ENCODE measurements at regions of chr11 and their contacts with region 1.

Region 1: DNA sequence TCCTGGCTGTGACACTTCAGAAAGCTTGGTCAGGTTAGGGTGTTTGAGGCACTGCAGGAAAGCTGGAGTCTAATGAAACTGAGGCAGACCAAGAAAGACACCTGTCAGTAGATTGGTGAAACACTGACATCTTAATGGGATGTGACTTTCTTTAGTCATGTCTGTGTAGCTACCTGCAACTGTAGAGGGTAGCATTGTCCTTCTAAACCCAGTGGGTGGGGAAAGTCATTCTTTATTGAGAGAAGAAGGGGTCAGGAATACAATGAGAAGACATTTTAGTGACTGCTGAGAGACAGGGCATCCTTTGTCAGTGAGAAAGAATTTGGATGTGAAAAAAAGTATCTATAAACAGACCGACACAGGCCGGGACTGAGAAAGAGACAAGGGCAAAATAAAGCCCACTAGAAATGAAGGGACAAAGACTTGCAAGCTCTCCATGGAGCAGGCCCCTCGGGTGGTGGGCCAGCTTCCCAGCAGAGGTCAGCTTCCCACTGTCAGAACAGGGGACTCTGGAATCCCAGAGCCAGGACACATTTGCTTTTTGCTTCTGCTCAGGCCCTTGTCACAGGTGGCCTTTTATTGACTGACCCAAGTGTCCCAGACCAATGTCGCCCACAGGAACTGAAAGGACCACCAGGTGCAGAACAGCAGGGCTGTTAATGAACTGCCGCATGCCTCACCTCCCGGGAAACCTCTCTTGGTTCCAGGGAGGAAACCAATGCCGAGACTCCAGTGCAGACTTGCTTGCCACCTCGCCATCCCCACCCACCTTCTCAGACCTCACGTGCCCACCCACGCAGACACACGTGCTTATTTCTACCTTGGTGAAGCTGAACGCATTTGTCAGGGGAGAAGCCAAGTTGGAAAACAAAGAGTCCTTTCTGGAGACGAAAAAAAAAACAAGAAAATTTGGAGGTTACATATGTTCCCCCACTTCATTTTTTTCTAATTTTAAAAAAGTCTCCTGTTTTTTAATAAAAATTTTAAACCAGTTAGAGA is 212.8 kb downstream of the TENM4 start:
- DNase-seq: no peak
- H3K4me3 ChIP-seq: no peak overlapping the region
- H3K27ac ChIP-seq: no peak overlapping the region
- H3K4me1 ChIP-seq: no peaks in the 10 kb centered on the region
- H3K27me3 ChIP-seq: no peaks in the 10 kb centered on the region
- CTCF ChIP-seq: no peak
- POLR2A ChIP-seq: no peak

Region 2: GRCh38 chr11:79291948-79292347 is 63.9 kb after region 1 on chr11:
- intact Hi-C with region 1: loop called (anchors 1 kb)
- DNase-seq: peak in 1 of 2 donors; percentile 47
- H3K4me3 ChIP-seq: no peak overlapping the region
- H3K27ac ChIP-seq: no peak overlapping the region
- H3K4me1 ChIP-seq: no peaks in the 10 kb centered on the region
- H3K27me3 ChIP-seq: no peaks in the 10 kb centered on the region
- CTCF ChIP-seq: no peak
- POLR2A ChIP-seq: no peak